PC-3 (cell line): ENCODE measurements at regions of chrX and their contacts with region 1.

Region 1: GRCh38 chrX:70454441-70455365 is 10.1 kb downstream of the DLG3 start:
- DNase-seq: peak; percentile 93
- ATAC-seq: peak; percentile 76
- H3K4me3 ChIP-seq: peak overlapping the region; percentile 98
- H3K27ac ChIP-seq: peak overlapping the region; percentile 89
- H3K4me1 ChIP-seq: peaks cover 33% of the 10 kb centered on the region
- H3K27me3 ChIP-seq: no peaks in the 10 kb centered on the region
- CTCF ChIP-seq: peak; percentile 94

Region 2: GRCh38 chrX:70324326-70324725 is 130.4 kb before region 1 on chrX:
- CTCF ChIA-PET with region 1: no interaction called
- POLR2A ChIA-PET with region 1: no interaction called
- intact Hi-C with region 1: no loop called
- DNase-seq: no peak
- ATAC-seq: no peak
- H3K4me3 ChIP-seq: no peak overlapping the region
- H3K27ac ChIP-seq: no peak overlapping the region
- H3K4me1 ChIP-seq: no peaks in the 10 kb centered on the region
- H3K27me3 ChIP-seq: no peaks in the 10 kb centered on the region
- CTCF ChIP-seq: no peak

Region 3: GRCh38 chrX:70476934-70477733 is 22.4 kb after region 1 on chrX:
- CTCF ChIA-PET with region 1: interaction called, 3 read pairs
- POLR2A ChIA-PET with region 1: interaction called, 4 read pairs
- intact Hi-C with region 1: loop called (anchors 1 kb)
- DNase-seq: peak; percentile 79
- ATAC-seq: peak; percentile 68
- H3K4me3 ChIP-seq: peak overlapping the region; percentile 43
- H3K27ac ChIP-seq: peak overlapping the region; percentile 99
- H3K4me1 ChIP-seq: peaks cover 60% of the 10 kb centered on the region
- H3K27me3 ChIP-seq: no peaks in the 10 kb centered on the region
- CTCF ChIP-seq: no peak

Region 4: DNA sequence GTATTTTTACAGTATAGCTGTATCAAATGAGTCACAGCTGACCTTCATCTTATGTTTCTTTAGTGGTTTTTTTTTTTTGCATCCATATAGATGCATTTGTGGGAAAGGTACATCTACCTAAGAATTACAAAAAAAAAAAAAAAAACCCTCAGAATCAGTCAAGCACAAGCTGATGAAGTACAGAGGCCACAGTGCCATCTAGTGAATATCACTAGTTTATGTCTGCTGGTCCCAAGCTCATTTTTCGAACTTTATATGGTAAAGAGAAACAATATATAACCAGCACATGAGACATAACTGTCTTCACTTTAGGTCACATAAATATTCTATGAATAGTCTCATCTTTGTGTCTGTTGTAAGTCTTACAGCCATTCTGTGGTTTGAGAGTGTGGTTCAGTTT is 210.0 kb after region 1 on chrX:
- CTCF ChIA-PET with region 1: interaction called, 5 read pairs
- POLR2A ChIA-PET with region 1: no interaction called
- intact Hi-C with region 1: loop called (anchors 1 kb)
- DNase-seq: peak; percentile 49
- ATAC-seq: peak; percentile 50
- H3K4me3 ChIP-seq: no peak overlapping the region
- H3K27ac ChIP-seq: no peak overlapping the region
- H3K4me1 ChIP-seq: no peaks in the 10 kb centered on the region
- H3K27me3 ChIP-seq: peaks cover 16% of the 10 kb centered on the region
- CTCF ChIP-seq: peak; percentile 58; the same call in 1 of the 2 replicates

Region 5: GRCh38 chrX:70769659-70770232 is 315.0 kb after region 1 on chrX:
- CTCF ChIA-PET with region 1: no interaction called
- POLR2A ChIA-PET with region 1: no interaction called
- intact Hi-C with region 1: loop called (anchors 5 kb)
- DNase-seq: peak; percentile 43
- ATAC-seq: no peak
- H3K4me3 ChIP-seq: no peak overlapping the region
- H3K27ac ChIP-seq: no peak overlapping the region
- H3K4me1 ChIP-seq: no peaks in the 10 kb centered on the region
- H3K27me3 ChIP-seq: peaks cover 8% of the 10 kb centered on the region; the same call in 1 of the 2 replicates
- CTCF ChIP-seq: peak; percentile 61

Region 6: GRCh38 chrX:70970482-70970995 is 515.8 kb after region 1 on chrX:
- CTCF ChIA-PET with region 1: no interaction called
- POLR2A ChIA-PET with region 1: no interaction called
- intact Hi-C with region 1: loop called (anchors 5 kb)
- DNase-seq: peak; percentile 49
- ATAC-seq: no peak
- H3K4me3 ChIP-seq: no peak overlapping the region
- H3K27ac ChIP-seq: no peak overlapping the region
- H3K4me1 ChIP-seq: no peaks in the 10 kb centered on the region
- H3K27me3 ChIP-seq: peaks cover 4% of the 10 kb centered on the region; the same call in 1 of the 2 replicates
- CTCF ChIP-seq: peak; percentile 61; the same call in 1 of the 2 replicates